CD4-positive, alpha-beta T cell (primary cell): ENCODE measurements at regions of chr17 and their contacts with region 1.

Region 1: GRCh38 chr17:35432176-35433074 is at the start of gene SLFN12:
- DNase-seq: peak in 13 of 14 experiments; percentile 5 to 87 (median 35)
- ATAC-seq: peak; percentile 92
- H3K4me3 ChIP-seq: peak within 1 kb of the TSS; percentile 88
- H3K4me3 Mint-ChIP-seq: peak within 1 kb of the TSS; percentile 99
- H3K27ac ChIP-seq: peak within 1 kb of the TSS; percentile 51 to 57
- H3K27ac Mint-ChIP-seq: peak within 1 kb of the TSS; percentile 85
- H3K4me1 ChIP-seq: peaks cover 38% of the 10 kb centered on the region
- H3K4me1 Mint-ChIP-seq: peaks cover 51% of the 10 kb centered on the region
- H3K27me3 ChIP-seq: no peaks in the 10 kb centered on the region
- H3K27me3 Mint-ChIP-seq: no peaks in the 10 kb centered on the region
- CTCF ChIP-seq: no peak
- total RNA-seq, gene SLFN12: 1.3 to 2.4 TPM

Region 2: GRCh38 chr17:35531160-35531559 is 98.7 kb after region 1 on chr17:
- CTCF ChIA-PET with region 1: interaction called, 6 read pairs
- POLR2A ChIA-PET with region 1: interaction called, 3 read pairs
- intact Hi-C with region 1: loop called in 1 of 2 experiments (anchors 5 kb)
- DNase-seq: peak in 2 of 14 experiments; percentile 37 to 59
- ATAC-seq: peak; percentile 34
- H3K4me3 ChIP-seq: peak overlapping the region; percentile 2
- H3K4me3 Mint-ChIP-seq: peak overlapping the region; percentile 21
- H3K27ac ChIP-seq: peak overlapping the region in 1 of 2 donors; percentile 11
- H3K27ac Mint-ChIP-seq: peak overlapping the region; percentile 80
- H3K4me1 ChIP-seq: peaks cover 37% of the 10 kb centered on the region
- H3K4me1 Mint-ChIP-seq: peaks cover 64% of the 10 kb centered on the region
- H3K27me3 ChIP-seq: no peaks in the 10 kb centered on the region
- H3K27me3 Mint-ChIP-seq: no peaks in the 10 kb centered on the region
- CTCF ChIP-seq: no peak